HepG2 (cell line): ENCODE measurements at regions of chr20 and their contacts with region 1.

Region 1: DNA sequence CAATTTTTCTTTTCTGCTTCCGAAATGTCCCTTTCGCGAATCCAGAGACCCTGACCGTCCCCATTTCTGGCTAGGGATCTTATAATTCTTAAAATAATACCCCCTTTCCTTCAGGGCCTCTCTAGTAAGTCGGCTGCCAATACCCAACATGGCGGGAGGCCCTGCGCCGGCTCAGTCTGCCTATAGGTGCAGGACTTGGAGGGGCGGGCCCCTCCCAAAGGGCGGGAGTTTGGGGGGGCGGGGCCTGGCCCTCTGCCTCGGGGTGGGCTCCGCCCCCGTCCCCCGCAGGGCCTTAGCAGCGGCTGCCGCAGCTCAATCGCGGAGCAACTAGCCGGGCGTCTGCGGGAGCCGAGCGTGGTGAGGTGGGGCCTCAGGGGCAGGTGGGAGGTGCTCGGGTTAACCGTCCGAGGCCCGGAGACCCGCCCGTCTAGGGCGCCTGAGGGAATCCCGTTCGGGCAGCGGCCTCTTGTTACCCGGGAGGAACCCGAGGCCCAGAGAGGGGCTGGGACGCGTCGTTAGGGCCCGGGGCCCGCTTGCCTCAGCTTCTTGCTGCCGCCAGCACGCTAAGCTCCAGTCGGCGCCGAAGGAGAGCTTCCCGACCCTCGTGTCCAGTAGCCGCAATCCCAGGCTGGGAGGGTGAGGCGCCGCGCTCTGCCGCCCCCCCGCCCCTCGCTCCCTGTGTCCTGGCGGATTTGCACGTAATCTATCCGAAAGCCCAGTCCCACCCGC is at the start of gene CEP250:
- DNase-seq: peak; percentile 98
- ATAC-seq: peak; percentile 95
- H3K4me3 ChIP-seq: peak within 1 kb of the TSS; percentile 79 to 89 (median 87)
- H3K27ac ChIP-seq: peak within 1 kb of the TSS; percentile 97
- H3K4me1 ChIP-seq: peaks cover 38% of the 10 kb centered on the region
- H3K27me3 ChIP-seq: no peaks in the 10 kb centered on the region; a peak in 1 of 5 replicates
- CTCF ChIP-seq: no peak; the same call in 1 of the 2 replicates
- EP300 ChIP-seq: no peak
- POLR2A ChIP-seq: peak; percentile 86 to 89
- RAD21 ChIP-seq: peak; percentile 61
- total RNA-seq, gene CEP250: 55.3 and 55.7 TPM in 2 replicates

Region 2: DNA sequence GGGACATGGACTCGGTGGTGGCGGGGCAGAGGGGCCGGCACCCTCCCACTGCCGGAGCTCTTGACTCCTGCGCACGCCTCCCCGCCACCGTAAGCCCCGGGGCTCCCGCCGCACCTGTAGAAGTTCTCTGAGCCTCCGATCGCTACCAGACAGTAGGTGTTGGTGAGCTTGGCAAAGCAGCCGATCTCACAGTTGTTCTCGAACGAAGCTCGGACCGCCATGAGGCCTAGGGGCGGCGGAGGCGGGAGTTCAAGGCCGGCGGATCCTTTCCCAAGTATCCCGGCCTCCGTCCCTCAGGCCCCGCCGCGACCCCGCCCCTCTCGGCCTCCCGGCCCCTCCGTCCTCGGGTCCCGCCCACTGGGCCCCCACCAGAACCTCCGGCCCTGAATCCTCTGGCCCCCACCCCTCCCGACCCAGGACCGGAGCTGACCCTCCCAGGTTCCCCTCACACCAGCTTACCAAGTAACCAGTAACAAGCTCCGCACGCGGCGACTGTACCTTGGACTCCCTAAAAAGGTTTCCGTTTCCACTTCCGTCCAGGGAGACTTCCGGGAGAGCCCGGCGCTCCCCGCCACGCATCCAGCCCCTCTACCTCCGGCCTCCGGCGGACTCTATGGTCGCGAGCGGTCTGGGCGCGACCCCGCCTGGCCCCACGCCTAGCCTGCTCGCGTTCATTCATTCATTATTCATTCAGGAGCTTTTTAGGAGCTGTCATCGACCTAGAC is 170.6 kb before region 1 on chr20 and contains the start of gene EIF6:
- CTCF ChIA-PET with region 1: no interaction called
- POLR2A ChIA-PET with region 1: interaction called, 24 read pairs
- in situ Hi-C with region 1: no loop called
- intact Hi-C with region 1: no loop called
- DNase-seq: peak; percentile 99
- ATAC-seq: peak; percentile 76
- H3K4me3 ChIP-seq: peak within 1 kb of the TSS; percentile 80 to 98 (median 81)
- H3K27ac ChIP-seq: peak within 1 kb of the TSS; percentile 95
- H3K4me1 ChIP-seq: peaks cover 74% of the 10 kb centered on the region
- H3K27me3 ChIP-seq: peaks cover 0 to 2% of the 10 kb centered on the region in 2 experiments; a peak in 2 of 5 replicates
- CTCF ChIP-seq: peak; percentile 19; the same call in 1 of the 2 replicates
- EP300 ChIP-seq: peak; percentile 43 to 59; a peak in 3 of 4 replicates
- POLR2A ChIP-seq: peak; percentile 94 to 96
- RAD21 ChIP-seq: peak; percentile 44
- total RNA-seq, gene EIF6: 462 and 603 TPM in 2 replicates

Region 3: DNA sequence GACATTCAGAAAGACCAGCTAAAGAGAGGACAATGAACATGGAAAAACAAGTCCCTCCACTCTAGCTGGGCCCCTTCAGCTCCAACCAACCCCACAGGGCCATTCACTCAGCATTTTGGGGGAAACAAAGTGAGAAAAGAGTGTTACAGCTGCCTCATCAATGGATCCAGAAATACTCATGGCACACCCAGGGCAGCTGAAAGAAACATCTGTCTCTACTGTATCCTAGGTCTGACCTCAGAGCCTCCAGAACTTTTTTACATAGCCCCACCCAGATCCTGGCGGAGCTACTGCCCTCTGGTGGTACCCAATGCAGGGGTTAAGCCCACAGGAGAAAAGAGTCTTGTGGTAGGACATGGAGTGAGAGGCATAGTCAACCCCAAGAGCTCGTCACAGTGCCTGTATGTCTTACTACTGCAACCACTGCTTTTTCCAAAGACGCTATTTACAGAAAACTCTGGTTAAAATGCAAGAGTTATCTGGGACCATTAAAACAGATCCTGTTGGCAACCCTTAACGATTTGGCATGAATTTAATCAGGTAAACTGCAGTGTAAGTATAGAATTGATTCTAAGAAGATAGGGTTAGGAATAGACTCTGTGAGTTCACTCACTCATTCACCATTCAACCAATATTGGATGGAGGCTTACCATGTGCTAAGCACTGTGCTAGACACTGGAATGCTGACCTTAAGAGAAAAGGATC is 125.5 kb before region 1 on chr20:
- CTCF ChIA-PET with region 1: no interaction called
- POLR2A ChIA-PET with region 1: interaction called, 12 read pairs
- in situ Hi-C with region 1: no loop called
- intact Hi-C with region 1: no loop called
- DNase-seq: peak; percentile 75
- ATAC-seq: peak; percentile 58
- H3K4me3 ChIP-seq: no peak overlapping the region
- H3K27ac ChIP-seq: peak overlapping the region; percentile 74
- H3K4me1 ChIP-seq: peaks cover 58% of the 10 kb centered on the region
- H3K27me3 ChIP-seq: no peaks in the 10 kb centered on the region
- CTCF ChIP-seq: peak; percentile 85
- EP300 ChIP-seq: 0 out of 4 replicates have a peak, but pooled peaks of 1 of the 2 experiments have one; percentile 3
- POLR2A ChIP-seq: no peak
- RAD21 ChIP-seq: peak; percentile 91

Region 4: GRCh38 chr20:35432430-35432735 is 22.7 kb before region 1 on chr20:
- CTCF ChIA-PET with region 1: no interaction called
- POLR2A ChIA-PET with region 1: interaction called, 18 read pairs
- in situ Hi-C with region 1: no loop called
- intact Hi-C with region 1: no loop called
- DNase-seq: no peak
- ATAC-seq: peak; percentile 21
- H3K4me3 ChIP-seq: peak overlapping the region; percentile 24 to 67 (median 29); a peak in 4 of 6 replicates
- H3K27ac ChIP-seq: no peak overlapping the region
- H3K4me1 ChIP-seq: peaks cover 43% of the 10 kb centered on the region
- H3K27me3 ChIP-seq: peaks cover 0 to 29% of the 10 kb centered on the region in 2 experiments; a peak in 3 of 5 replicates
- CTCF ChIP-seq: no peak
- EP300 ChIP-seq: no peak
- POLR2A ChIP-seq: no peak
- RAD21 ChIP-seq: no peak

Region 5: GRCh38 chr20:35541783-35542588 is 86.9 kb after region 1 on chr20 and contains the start of gene ERGIC3:
- CTCF ChIA-PET with region 1: no interaction called
- POLR2A ChIA-PET with region 1: interaction called, 29 read pairs
- in situ Hi-C with region 1: no loop called
- intact Hi-C with region 1: no loop called
- DNase-seq: peak; percentile 97
- ATAC-seq: peak; percentile 93
- H3K4me3 ChIP-seq: peak within 1 kb of the TSS; percentile 74 to 93 (median 79)
- H3K27ac ChIP-seq: peak within 1 kb of the TSS; percentile 85
- H3K4me1 ChIP-seq: peaks cover 29% of the 10 kb centered on the region
- H3K27me3 ChIP-seq: no peaks in the 10 kb centered on the region
- CTCF ChIP-seq: peak; percentile 43; the same call in 1 of the 2 replicates
- EP300 ChIP-seq: no peak
- POLR2A ChIP-seq: peak; percentile 82 to 92
- RAD21 ChIP-seq: no peak; the same call in 1 of the 2 replicates
- total RNA-seq, gene ERGIC3: 224 and 407 TPM in 2 replicates

Region 6: DNA sequence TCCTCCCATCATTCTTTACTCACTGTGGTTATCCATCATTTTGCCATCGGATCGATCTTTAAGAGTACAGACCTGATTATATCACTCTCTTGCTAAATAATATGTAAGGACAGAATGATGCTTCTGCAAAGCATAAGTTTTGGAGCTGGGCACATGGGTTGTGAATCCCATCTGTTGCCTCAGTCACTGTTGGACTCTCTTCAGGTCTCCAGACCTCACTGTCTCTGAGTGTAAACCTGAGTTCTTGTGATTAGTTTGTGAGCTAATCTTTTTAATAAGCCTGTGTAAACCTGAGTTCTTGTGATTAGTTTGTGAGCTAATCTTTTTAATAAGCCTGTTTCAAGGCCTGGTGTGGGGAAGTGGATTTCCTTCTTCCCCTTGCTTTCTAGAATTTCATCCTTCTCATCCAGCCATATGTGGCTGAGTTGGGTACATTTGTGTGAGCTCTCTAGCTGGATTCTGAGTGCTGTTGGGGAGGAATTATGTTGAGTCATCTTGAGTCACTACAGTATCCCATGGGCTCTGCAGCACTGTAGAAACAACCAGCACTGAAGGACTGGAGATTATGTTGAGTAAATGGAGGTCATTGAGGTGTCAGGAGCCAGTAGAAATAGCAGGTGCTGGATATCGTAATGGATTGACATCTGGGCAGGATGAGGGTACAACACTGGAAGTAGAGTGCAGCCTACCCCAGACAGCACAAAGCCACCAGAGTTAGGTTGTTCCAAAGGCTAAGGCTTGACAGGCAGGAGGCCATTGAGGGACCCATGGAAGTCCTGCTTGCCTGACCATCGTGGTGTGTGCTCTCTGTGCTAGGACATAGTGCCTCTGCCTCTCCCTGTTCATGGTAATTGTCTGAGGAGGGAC is 446.9 kb after region 1 on chr20:
- CTCF ChIA-PET with region 1: no interaction called
- POLR2A ChIA-PET with region 1: no interaction called
- in situ Hi-C with region 1: no loop called
- intact Hi-C with region 1: no loop called
- DNase-seq: peak; percentile 33
- ATAC-seq: peak; percentile 55
- H3K4me3 ChIP-seq: no peak overlapping the region
- H3K27ac ChIP-seq: no peak overlapping the region
- H3K4me1 ChIP-seq: no peaks in the 10 kb centered on the region
- H3K27me3 ChIP-seq: no peaks in the 10 kb centered on the region
- CTCF ChIP-seq: no peak
- EP300 ChIP-seq: no peak
- POLR2A ChIP-seq: no peak
- RAD21 ChIP-seq: no peak

Region 7: DNA sequence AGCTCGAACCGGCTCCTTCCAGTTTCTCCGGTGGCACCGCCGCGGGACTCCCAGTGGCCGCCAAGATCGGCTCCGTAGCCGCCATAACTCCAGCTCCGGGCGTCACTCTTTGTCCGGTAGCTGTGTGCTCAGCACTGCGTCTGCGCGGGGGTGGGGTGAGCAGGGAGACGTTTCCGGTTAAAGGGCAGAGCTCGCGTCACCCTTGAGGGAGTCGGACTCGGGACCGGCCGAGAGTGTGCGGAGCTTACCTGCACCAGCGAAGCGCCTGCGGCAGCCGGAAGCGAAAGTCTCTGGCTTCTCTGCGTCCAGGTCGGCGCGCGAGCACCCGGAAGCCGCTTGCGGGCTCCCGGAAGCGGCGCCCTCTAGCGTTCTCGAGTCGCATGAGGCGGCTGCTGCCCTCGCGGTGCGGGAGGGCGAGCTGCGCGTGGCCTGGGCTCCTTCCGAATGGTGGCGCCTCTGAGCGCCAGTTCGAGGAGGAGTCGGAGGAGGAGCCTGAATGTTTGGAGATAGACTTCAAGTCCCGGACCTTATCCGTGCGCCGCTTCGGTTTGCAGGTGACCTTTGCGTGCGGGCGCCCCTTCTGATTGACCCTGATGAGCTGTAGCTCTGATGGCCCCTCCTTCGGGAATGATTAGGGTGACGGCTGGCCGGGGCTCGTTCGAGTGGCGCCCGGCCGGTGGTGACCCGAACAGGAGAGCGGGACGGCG is 499.3 kb after region 1 on chr20 and contains the start of gene SCAND1:
- CTCF ChIA-PET with region 1: no interaction called
- POLR2A ChIA-PET with region 1: interaction called, 11 read pairs
- in situ Hi-C with region 1: no loop called
- intact Hi-C with region 1: no loop called
- DNase-seq: peak; percentile 99
- ATAC-seq: peak; percentile 92
- H3K4me3 ChIP-seq: peak within 1 kb of the TSS; percentile 86 to 99 (median 97)
- H3K27ac ChIP-seq: peak within 1 kb of the TSS; percentile 97
- H3K4me1 ChIP-seq: peaks cover 23% of the 10 kb centered on the region
- H3K27me3 ChIP-seq: no peaks in the 10 kb centered on the region; a peak in 1 of 5 replicates
- CTCF ChIP-seq: peak; percentile 100
- EP300 ChIP-seq: peak; percentile 73 to 82
- POLR2A ChIP-seq: peak; percentile 97
- RAD21 ChIP-seq: peak; percentile 93
- total RNA-seq, gene SCAND1: 86.3 and 109 TPM in 2 replicates